MCF 10A (cell line): ENCODE measurements at regions of chr3 and their contacts with region 1.

Region 1: GRCh38 chr3:159988617-159989271 is at the start of gene IL12A:
- DNase-seq: peak; percentile 78
- H3K4me3 Mint-ChIP-seq: peak within 1 kb of the TSS; percentile 75
- H3K27ac Mint-ChIP-seq: peak within 1 kb of the TSS; percentile 18
- H3K4me1 Mint-ChIP-seq: peaks cover 27% of the 10 kb centered on the region
- H3K27me3 Mint-ChIP-seq: no peaks in the 10 kb centered on the region
- CTCF ChIP-seq: peak; percentile 92
- total RNA-seq, gene IL12A: 1.3 and 1.7 TPM in 2 replicates

Region 2: GRCh38 chr3:159897331-159898075 is 91.2 kb before region 1 on chr3:
- CTCF ChIA-PET with region 1: interaction called, 14 read pairs
- POLR2A ChIA-PET with region 1: no interaction called
- intact Hi-C with region 1: no loop called
- DNase-seq: peak; percentile 21
- H3K4me3 Mint-ChIP-seq: no peak overlapping the region
- H3K27ac Mint-ChIP-seq: peak overlapping the region; percentile 12
- H3K4me1 Mint-ChIP-seq: peaks cover 6% of the 10 kb centered on the region
- H3K27me3 Mint-ChIP-seq: no peaks in the 10 kb centered on the region
- CTCF ChIP-seq: no peak

Region 3: GRCh38 chr3:159917141-159917540 is 71.6 kb before region 1 on chr3:
- CTCF ChIA-PET with region 1: interaction called, 14 read pairs
- POLR2A ChIA-PET with region 1: interaction called, 3 read pairs
- intact Hi-C with region 1: no loop called
- DNase-seq: no peak
- H3K4me3 Mint-ChIP-seq: no peak overlapping the region
- H3K27ac Mint-ChIP-seq: no peak overlapping the region
- H3K4me1 Mint-ChIP-seq: no peaks in the 10 kb centered on the region
- H3K27me3 Mint-ChIP-seq: no peaks in the 10 kb centered on the region
- CTCF ChIP-seq: no peak

Region 4: GRCh38 chr3:159929435-159930141 is 59.2 kb before region 1 on chr3:
- CTCF ChIA-PET with region 1: interaction called, 29 read pairs
- POLR2A ChIA-PET with region 1: no interaction called
- intact Hi-C with region 1: no loop called
- DNase-seq: peak; percentile 64
- H3K4me3 Mint-ChIP-seq: peak overlapping the region; percentile 33
- H3K27ac Mint-ChIP-seq: peak overlapping the region; percentile 24
- H3K4me1 Mint-ChIP-seq: peaks cover 16% of the 10 kb centered on the region
- H3K27me3 Mint-ChIP-seq: no peaks in the 10 kb centered on the region
- CTCF ChIP-seq: peak; percentile 24

Region 5: DNA sequence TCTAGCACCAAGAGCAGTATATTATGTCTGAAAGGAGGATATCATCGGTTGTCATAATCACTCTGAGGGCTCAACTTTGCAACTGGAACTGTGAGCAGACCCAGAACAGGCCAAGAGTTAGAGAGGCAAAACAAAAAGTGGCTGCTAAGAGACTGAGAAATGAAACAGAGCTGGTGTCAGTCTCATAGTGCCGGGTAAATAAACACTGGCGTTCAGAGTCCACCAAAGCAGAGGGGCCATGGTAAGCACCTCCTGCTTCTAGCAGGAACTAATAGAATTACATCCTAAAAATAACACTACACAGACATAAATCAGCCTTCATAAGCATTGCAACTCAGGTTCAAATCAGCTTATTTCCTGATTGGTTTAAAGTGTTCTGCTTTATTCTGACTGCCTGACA is 10.4 kb before region 1 on chr3:
- CTCF ChIA-PET with region 1: interaction called, 57 read pairs
- POLR2A ChIA-PET with region 1: interaction called, 3 read pairs
- intact Hi-C with region 1: no loop called
- DNase-seq: no peak
- H3K4me3 Mint-ChIP-seq: no peak overlapping the region
- H3K27ac Mint-ChIP-seq: no peak overlapping the region
- H3K4me1 Mint-ChIP-seq: no peaks in the 10 kb centered on the region
- H3K27me3 Mint-ChIP-seq: no peaks in the 10 kb centered on the region
- CTCF ChIP-seq: no peak